Endothelial cell of umbilical vein (primary cell): ENCODE measurements at regions of chr2 and their contacts with region 1.

Region 1: GRCh38 chr2:71299507-71299906 is 32.1 kb upstream of the ZNF638 start:
- DNase-seq: peak; percentile 63
- H3K4me3 ChIP-seq: no peak overlapping the region
- H3K27ac ChIP-seq: no peak overlapping the region
- H3K4me1 ChIP-seq: no peaks in the 10 kb centered on the region
- H3K27me3 ChIP-seq: no peaks in the 10 kb centered on the region
- CTCF ChIP-seq: peak; percentile 31 to 38
- POLR2A ChIP-seq: no peak

Region 2: DNA sequence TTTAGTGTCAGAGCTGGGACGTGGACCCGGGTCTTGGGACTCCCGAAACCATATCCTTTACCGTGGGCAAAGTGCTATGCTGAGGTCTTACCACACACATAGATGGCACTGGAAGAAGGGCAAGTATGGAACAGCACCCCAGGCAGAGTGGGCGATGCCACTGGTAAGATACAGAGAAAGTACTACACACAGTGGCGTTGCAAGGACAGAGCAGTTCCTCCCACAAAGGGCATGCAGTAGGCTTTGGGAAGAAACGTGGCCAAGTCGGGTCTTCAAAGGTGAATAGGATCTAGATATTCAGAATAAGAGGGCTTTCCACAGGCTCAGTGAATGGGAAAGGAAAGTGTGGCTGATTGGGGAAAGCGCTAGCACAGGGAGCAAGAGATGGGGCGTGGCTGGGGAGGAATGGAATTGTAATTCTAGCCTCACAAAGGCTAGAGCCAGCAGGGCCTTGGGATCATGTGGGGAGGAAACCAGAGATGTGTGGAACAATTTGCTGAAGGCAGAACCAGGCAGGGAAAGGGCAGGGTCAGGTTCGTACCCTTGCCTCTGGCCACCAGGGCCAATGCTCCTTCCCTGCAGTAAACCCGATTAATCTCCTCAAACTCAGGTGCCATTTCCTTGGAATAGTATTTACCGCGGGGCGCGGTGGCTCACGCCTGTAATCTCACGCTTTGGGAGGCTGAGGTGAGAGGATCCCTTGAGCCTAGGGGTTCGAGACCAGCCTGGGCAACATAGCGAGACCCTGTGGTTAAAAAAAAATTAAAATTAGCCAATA is 1176.3 kb before region 1 on chr2:
- CTCF ChIA-PET with region 1: no interaction called
- POLR2A ChIA-PET with region 1: no interaction called
- dilution Hi-C with region 1: no loop called
- intact Hi-C with region 1: no loop called
- DNase-seq: no peak
- H3K4me3 ChIP-seq: no peak overlapping the region
- H3K27ac ChIP-seq: no peak overlapping the region
- H3K4me1 ChIP-seq: peaks cover 14% of the 10 kb centered on the region
- H3K27me3 ChIP-seq: no peaks in the 10 kb centered on the region
- CTCF ChIP-seq: no peak
- POLR2A ChIP-seq: no peak

Region 3: GRCh38 chr2:71276311-71277146 is 23.0 kb before region 1 on chr2:
- CTCF ChIA-PET with region 1: interaction called, 23 read pairs
- POLR2A ChIA-PET with region 1: no interaction called
- dilution Hi-C with region 1: no loop called
- intact Hi-C with region 1: no loop called
- DNase-seq: peak; percentile 93
- H3K4me3 ChIP-seq: peak overlapping the region; percentile 57 to 82 (median 65)
- H3K27ac ChIP-seq: no peak overlapping the region
- H3K4me1 ChIP-seq: peaks cover 14% of the 10 kb centered on the region
- H3K27me3 ChIP-seq: peaks cover 3 to 11% of the 10 kb centered on the region in 2 experiments
- CTCF ChIP-seq: peak in 1 of 2 donors; percentile 12
- POLR2A ChIP-seq: peak; percentile 44

Region 4: GRCh38 chr2:71313016-71313766 is 13.7 kb after region 1 on chr2:
- CTCF ChIA-PET with region 1: interaction called, 23 read pairs
- POLR2A ChIA-PET with region 1: no interaction called
- dilution Hi-C with region 1: no loop called
- intact Hi-C with region 1: no loop called
- DNase-seq: no peak
- H3K4me3 ChIP-seq: no peak overlapping the region
- H3K27ac ChIP-seq: no peak overlapping the region
- H3K4me1 ChIP-seq: no peaks in the 10 kb centered on the region
- H3K27me3 ChIP-seq: no peaks in the 10 kb centered on the region
- CTCF ChIP-seq: no peak
- POLR2A ChIP-seq: no peak

Region 5: DNA sequence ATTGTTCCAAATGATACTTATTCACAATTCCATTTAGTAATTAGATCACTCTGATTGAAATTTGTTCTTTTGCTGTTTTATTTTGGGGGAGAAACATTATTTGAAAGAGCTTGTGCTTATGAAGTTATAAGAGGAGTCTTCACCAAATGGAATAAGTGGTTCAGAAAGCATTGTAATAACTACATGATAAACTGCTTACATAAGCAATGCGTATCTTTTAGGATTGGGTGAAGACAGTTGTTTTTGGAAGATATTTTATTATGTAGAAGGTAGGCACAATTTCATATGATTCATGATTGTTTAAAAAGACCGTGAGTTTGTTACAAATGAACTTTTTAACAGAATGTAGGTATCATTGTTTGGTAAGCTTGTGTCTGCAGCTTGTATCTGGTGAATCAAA is 46.6 kb after region 1 on chr2:
- CTCF ChIA-PET with region 1: interaction called, 14 read pairs
- POLR2A ChIA-PET with region 1: no interaction called
- dilution Hi-C with region 1: no loop called
- intact Hi-C with region 1: no loop called
- DNase-seq: no peak
- H3K4me3 ChIP-seq: no peak overlapping the region
- H3K27ac ChIP-seq: no peak overlapping the region
- H3K4me1 ChIP-seq: no peaks in the 10 kb centered on the region
- H3K27me3 ChIP-seq: no peaks in the 10 kb centered on the region
- CTCF ChIP-seq: no peak
- POLR2A ChIP-seq: no peak

Region 6: DNA sequence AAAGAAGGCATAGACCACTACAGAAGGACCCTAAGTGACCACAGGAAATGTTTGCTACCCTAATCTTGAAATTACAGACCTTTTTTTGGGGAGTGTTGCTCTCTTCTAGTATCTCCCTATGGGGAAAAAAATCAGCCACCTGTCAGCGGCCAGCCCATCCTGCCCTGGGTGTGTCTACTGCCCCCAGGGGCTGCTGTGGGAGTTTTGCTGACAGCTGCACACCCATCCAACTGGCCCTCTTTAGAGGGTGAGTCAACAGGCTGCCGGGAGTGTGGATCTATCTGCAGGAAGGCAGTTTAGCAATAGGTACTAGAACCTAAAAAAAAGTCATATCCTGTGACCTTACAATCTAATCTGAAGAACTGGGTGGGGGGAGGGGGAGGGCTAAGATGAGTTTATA is 153.1 kb after region 1 on chr2:
- CTCF ChIA-PET with region 1: interaction called, 28 read pairs
- POLR2A ChIA-PET with region 1: no interaction called
- dilution Hi-C with region 1: no loop called
- intact Hi-C with region 1: loop called (anchors 5 kb)
- DNase-seq: peak; percentile 42
- H3K4me3 ChIP-seq: no peak overlapping the region
- H3K27ac ChIP-seq: no peak overlapping the region
- H3K4me1 ChIP-seq: peaks cover 47% of the 10 kb centered on the region
- H3K27me3 ChIP-seq: no peaks in the 10 kb centered on the region
- CTCF ChIP-seq: peak; percentile 31 to 36
- POLR2A ChIP-seq: no peak

Region 7: DNA sequence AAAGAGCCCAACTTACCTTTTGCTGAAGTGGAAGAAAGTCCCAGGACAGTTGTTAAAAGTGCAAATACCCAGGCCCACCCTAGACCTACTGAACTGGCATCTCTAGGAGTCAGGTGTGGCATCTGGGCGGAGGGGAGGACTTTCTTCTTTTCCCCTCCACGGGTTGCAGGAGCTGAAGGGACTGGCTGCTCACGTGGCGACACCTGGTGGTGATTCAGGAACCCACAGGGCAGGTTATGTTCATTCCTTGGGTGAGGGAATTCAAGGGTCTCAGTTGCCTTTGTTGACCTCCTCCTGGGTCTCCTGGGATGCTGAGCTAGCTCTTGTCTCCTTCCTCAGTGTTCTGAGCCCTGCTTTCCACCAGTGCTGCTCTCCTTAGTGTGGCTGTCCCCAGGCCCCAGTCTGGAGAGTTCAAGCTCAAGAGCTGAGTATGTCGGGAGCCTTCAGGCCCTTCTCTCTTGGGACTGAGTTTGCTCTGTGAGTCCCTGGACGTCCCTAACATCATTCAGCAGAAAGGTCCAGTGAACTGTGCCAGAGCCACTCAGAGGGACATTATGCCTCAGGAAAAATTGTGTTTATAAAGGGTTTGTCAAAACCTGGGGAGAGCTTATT is 210.8 kb after region 1 on chr2:
- CTCF ChIA-PET with region 1: interaction called, 219 read pairs
- POLR2A ChIA-PET with region 1: interaction called, 3 read pairs
- dilution Hi-C with region 1: no loop called
- intact Hi-C with region 1: loop called (anchors 1 kb)
- DNase-seq: peak; percentile 63
- H3K4me3 ChIP-seq: no peak overlapping the region
- H3K27ac ChIP-seq: no peak overlapping the region
- H3K4me1 ChIP-seq: peaks cover 8% of the 10 kb centered on the region
- H3K27me3 ChIP-seq: no peaks in the 10 kb centered on the region
- CTCF ChIP-seq: peak; percentile 89 to 90
- POLR2A ChIP-seq: no peak

Region 8: GRCh38 chr2:71691747-71692501 is 392.4 kb after region 1 on chr2:
- CTCF ChIA-PET with region 1: no interaction called
- POLR2A ChIA-PET with region 1: no interaction called
- dilution Hi-C with region 1: no loop called
- intact Hi-C with region 1: no loop called
- DNase-seq: no peak
- H3K4me3 ChIP-seq: no peak overlapping the region
- H3K27ac ChIP-seq: no peak overlapping the region
- H3K4me1 ChIP-seq: no peaks in the 10 kb centered on the region
- H3K27me3 ChIP-seq: no peaks in the 10 kb centered on the region
- CTCF ChIP-seq: peak in 1 of 2 donors; percentile 25
- POLR2A ChIP-seq: no peak

Region 9: GRCh38 chr2:72150157-72150865 is 850.8 kb after region 1 on chr2:
- CTCF ChIA-PET with region 1: interaction called, 14 read pairs
- POLR2A ChIA-PET with region 1: no interaction called
- dilution Hi-C with region 1: no loop called
- intact Hi-C with region 1: no loop called
- DNase-seq: peak; percentile 77
- H3K4me3 ChIP-seq: no peak overlapping the region
- H3K27ac ChIP-seq: no peak overlapping the region
- H3K4me1 ChIP-seq: peaks cover 15% of the 10 kb centered on the region
- H3K27me3 ChIP-seq: peaks cover 33 to 48% of the 10 kb centered on the region in 2 experiments
- CTCF ChIP-seq: peak; percentile 66 to 85
- POLR2A ChIP-seq: no peak